ENCODE measurements at regions of chr10 and their contacts with region 1.

Region 1: GRCh38 chr10:59906417-59907202 is at the start of gene CCDC6:
- DNase-seq: peak; percentile 78
- ATAC-seq: peak; percentile 87
- H3K4me3 ChIP-seq: peak within 1 kb of the TSS; percentile 93 to 95
- H3K27ac ChIP-seq: peak within 1 kb of the TSS; percentile 66
- H3K4me1 ChIP-seq: peaks cover 18 to 37% of the 10 kb centered on the region in 2 experiments
- H3K27me3 ChIP-seq: no peaks in the 10 kb centered on the region
- CTCF ChIP-seq: peak; percentile 49 to 62 (median 55); a peak in 5 of 6 replicates
- POLR2A ChIP-seq: peak; percentile 47
- RAD21 ChIP-seq: peak; percentile 46
- total RNA-seq, gene CCDC6: 54.9 TPM

Region 2: DNA sequence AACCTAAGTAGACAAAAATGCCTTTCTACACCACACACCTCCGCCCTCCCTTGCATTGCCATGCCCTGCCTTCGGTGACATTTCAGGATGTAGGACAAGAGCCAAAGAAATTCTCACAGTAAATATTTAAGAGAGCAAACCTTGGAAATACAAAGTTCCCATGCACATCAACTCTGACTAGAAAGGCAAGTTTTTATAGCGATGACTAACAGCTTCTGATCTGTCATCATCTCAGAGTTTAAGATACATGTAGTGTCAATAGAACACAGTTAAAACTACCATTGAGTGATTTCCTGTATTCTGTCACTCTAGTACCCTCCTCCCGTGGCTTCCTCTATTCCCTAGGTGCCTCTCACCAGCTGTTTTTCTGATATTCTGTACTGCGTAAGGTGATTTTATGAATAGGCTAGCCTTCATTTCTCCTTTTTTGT is 217.7 kb before region 1 on chr10:
- CTCF ChIA-PET with region 1: no interaction called
- POLR2A ChIA-PET with region 1: no interaction called
- RAD21 ChIA-PET with region 1: no interaction called
- intact Hi-C with region 1: no loop called
- DNase-seq: no peak
- ATAC-seq: no peak
- H3K4me3 ChIP-seq: no peak overlapping the region
- H3K27ac ChIP-seq: no peak overlapping the region
- H3K4me1 ChIP-seq: 0 out of 4 replicates have a peak, but pooled peaks cover 0 to 5% of the 10 kb centered on the region in 2 experiments
- H3K27me3 ChIP-seq: no peaks in the 10 kb centered on the region
- CTCF ChIP-seq: no peak
- POLR2A ChIP-seq: no peak
- RAD21 ChIP-seq: no peak

Region 3: GRCh38 chr10:59967069-59967468 is 60.5 kb after region 1 on chr10:
- CTCF ChIA-PET with region 1: no interaction called
- POLR2A ChIA-PET with region 1: interaction called, 3 read pairs
- RAD21 ChIA-PET with region 1: no interaction called
- intact Hi-C with region 1: loop called (anchors 5 kb)
- DNase-seq: no peak
- ATAC-seq: no peak
- H3K4me3 ChIP-seq: no peak overlapping the region
- H3K27ac ChIP-seq: no peak overlapping the region
- H3K4me1 ChIP-seq: peaks cover 34 to 39% of the 10 kb centered on the region in 2 experiments
- H3K27me3 ChIP-seq: no peaks in the 10 kb centered on the region
- CTCF ChIP-seq: no peak
- POLR2A ChIP-seq: no peak
- RAD21 ChIP-seq: no peak

Region 4: GRCh38 chr10:60114765-60115586 is 208.4 kb after region 1 on chr10:
- CTCF ChIA-PET with region 1: no interaction called
- POLR2A ChIA-PET with region 1: no interaction called
- RAD21 ChIA-PET with region 1: no interaction called
- intact Hi-C with region 1: no loop called
- DNase-seq: peak; percentile 29
- ATAC-seq: peak; percentile 66
- H3K4me3 ChIP-seq: no peak overlapping the region
- H3K27ac ChIP-seq: no peak overlapping the region
- H3K4me1 ChIP-seq: no peaks in the 10 kb centered on the region
- H3K27me3 ChIP-seq: no peaks in the 10 kb centered on the region
- CTCF ChIP-seq: peak; percentile 61 to 73 (median 64)
- POLR2A ChIP-seq: no peak
- RAD21 ChIP-seq: peak; percentile 75